A673 (cell line): ENCODE measurements at regions of chr18 and their contacts with region 1.

Region 1: GRCh38 chr18:24118750-24119577 is 19.9 kb upstream of the CABYR start:
- DNase-seq: peak; percentile 73
- H3K4me3 ChIP-seq: no peak overlapping the region
- H3K27ac ChIP-seq: no peak overlapping the region
- H3K4me1 ChIP-seq: peaks cover 3% of the 10 kb centered on the region
- H3K27me3 ChIP-seq: no peaks in the 10 kb centered on the region
- CTCF ChIP-seq: peak; percentile 87

Region 2: DNA sequence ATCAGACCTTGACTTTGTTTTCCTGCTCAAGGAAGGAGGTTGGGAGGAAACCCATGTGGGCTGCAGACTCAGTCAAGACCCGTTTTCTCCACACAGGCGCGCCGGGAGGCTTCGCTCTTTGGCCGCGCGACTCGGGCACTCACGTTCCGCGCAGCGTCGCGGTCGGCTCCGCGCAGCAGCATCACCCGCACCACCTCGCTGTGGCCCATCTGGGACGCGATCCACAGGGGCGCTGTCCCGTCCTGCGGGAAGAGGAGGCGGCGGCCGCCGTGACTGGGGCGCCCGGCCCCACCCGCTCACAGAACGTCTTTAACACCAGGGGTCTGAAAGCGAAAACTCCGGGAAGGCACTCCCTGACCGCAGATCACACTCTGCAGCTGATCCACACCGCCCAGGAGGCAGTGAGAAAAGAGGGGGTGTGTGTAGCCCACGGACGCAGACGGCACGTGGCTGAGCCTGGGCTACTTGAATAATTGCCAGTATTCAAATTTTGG is 499.5 kb before region 1 on chr18:
- CTCF ChIA-PET with region 1: no interaction called
- POLR2A ChIA-PET with region 1: no interaction called
- intact Hi-C with region 1: loop called (anchors 5 kb)
- DNase-seq: no peak
- H3K4me3 ChIP-seq: peak overlapping the region; percentile 42
- H3K27ac ChIP-seq: no peak overlapping the region
- H3K4me1 ChIP-seq: no peaks in the 10 kb centered on the region
- H3K27me3 ChIP-seq: peaks cover 17% of the 10 kb centered on the region
- CTCF ChIP-seq: no peak

Region 3: DNA sequence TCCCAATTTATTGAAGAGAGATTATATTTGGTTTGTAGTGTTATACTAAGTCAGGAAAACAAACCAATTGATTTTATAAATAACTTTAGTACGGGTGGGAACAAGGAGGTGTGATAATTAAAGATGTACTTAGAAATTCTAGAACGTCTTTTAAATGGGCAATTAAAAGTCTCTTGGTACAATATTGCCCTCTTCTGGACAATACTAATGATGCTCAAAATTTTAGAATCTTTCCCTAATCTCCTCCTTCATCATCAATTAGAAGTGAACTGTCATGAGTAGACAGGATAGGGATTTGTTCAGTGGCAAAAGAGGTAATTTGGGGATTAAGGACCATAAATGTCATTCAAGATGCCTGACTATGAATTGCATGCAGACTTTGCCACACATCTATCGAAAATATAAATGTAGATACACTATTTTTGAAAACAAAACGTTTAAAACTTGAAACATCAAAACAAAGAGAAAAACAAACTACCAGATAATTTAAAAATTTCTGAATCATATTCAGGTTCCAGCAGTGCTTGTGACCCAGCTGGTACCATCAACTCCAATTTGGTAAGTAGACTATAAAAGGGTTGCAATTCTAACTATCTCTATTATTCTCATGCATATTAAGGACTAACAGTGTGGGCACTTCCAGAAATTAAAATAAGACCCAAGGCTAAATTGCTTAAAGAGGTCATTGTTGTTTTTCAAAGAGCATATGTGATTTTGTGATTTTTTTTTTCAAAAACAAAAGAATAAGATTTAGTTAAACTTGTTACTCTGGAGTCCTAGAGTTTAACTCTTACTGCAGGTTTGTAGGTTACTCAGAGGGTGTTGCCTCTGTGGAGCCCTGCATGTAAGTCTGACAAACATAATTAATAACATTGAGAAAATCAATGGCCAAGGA is 306.2 kb before region 1 on chr18:
- CTCF ChIA-PET with region 1: no interaction called
- POLR2A ChIA-PET with region 1: no interaction called
- intact Hi-C with region 1: loop called (anchors 2 kb)
- DNase-seq: peak; percentile 66
- H3K4me3 ChIP-seq: no peak overlapping the region
- H3K27ac ChIP-seq: no peak overlapping the region
- H3K4me1 ChIP-seq: no peaks in the 10 kb centered on the region
- H3K27me3 ChIP-seq: no peaks in the 10 kb centered on the region
- CTCF ChIP-seq: peak; percentile 65

Region 4: GRCh38 chr18:23918401-23919032 is 200.4 kb before region 1 on chr18:
- CTCF ChIA-PET with region 1: no interaction called
- POLR2A ChIA-PET with region 1: no interaction called
- intact Hi-C with region 1: loop called (anchors 2 kb)
- DNase-seq: peak; percentile 84
- H3K4me3 ChIP-seq: no peak overlapping the region
- H3K27ac ChIP-seq: no peak overlapping the region
- H3K4me1 ChIP-seq: no peaks in the 10 kb centered on the region
- H3K27me3 ChIP-seq: no peaks in the 10 kb centered on the region
- CTCF ChIP-seq: peak; percentile 91

Region 5: GRCh38 chr18:23958036-23958435 is 160.9 kb before region 1 on chr18:
- CTCF ChIA-PET with region 1: no interaction called
- POLR2A ChIA-PET with region 1: no interaction called
- intact Hi-C with region 1: loop called (anchors 10 kb)
- DNase-seq: no peak
- H3K4me3 ChIP-seq: no peak overlapping the region
- H3K27ac ChIP-seq: no peak overlapping the region
- H3K4me1 ChIP-seq: no peaks in the 10 kb centered on the region
- H3K27me3 ChIP-seq: no peaks in the 10 kb centered on the region
- CTCF ChIP-seq: no peak

Region 6: GRCh38 chr18:24014986-24015638 is 103.9 kb before region 1 on chr18:
- CTCF ChIA-PET with region 1: no interaction called
- POLR2A ChIA-PET with region 1: no interaction called
- intact Hi-C with region 1: loop called (anchors 5 kb)
- DNase-seq: peak; percentile 70
- H3K4me3 ChIP-seq: peak overlapping the region; percentile 89
- H3K27ac ChIP-seq: peak overlapping the region; percentile 78
- H3K4me1 ChIP-seq: peaks cover 18% of the 10 kb centered on the region
- H3K27me3 ChIP-seq: no peaks in the 10 kb centered on the region
- CTCF ChIP-seq: no peak

Region 7: DNA sequence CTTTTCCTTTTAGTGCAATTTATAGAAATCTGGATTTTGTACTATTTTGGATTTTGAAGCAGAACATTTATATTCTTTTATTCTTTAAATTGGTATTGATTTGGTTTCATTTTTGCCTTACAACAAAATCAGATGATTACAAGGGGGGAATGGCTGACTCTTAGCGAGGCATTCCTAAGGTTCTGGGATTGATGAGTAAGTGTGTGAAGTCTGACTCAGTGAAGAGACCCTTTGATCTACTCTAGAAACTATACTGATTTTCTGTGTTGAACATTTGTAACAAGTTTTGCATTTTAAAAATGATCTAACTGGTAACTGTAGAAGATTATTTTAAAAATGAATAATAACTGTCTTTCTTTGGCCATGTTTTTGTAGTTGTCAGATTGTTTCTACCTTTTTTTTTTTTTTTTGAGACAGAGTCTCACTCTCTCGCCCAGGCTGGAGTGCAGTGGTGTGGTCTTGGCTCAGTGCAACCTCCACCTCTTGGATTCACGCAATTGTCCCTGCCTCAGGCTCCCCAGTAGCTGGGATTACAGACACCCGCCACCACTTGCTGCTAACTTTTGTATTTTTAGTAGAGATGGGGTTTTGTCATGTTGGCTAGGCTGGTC is 55.7 kb before region 1 on chr18:
- CTCF ChIA-PET with region 1: no interaction called
- POLR2A ChIA-PET with region 1: no interaction called
- intact Hi-C with region 1: loop called (anchors 10 kb)
- DNase-seq: no peak
- H3K4me3 ChIP-seq: no peak overlapping the region
- H3K27ac ChIP-seq: no peak overlapping the region
- H3K4me1 ChIP-seq: no peaks in the 10 kb centered on the region
- H3K27me3 ChIP-seq: no peaks in the 10 kb centered on the region
- CTCF ChIP-seq: no peak